ENCODE measurements at regions of chr12 and their contacts with region 1.

Region 1: GRCh38 chr12:116599285-116600136 is 40.3 kb downstream of the MAP1LC3B2 start:
- DNase-seq: peak; percentile 72
- ATAC-seq: peak; percentile 77
- H3K4me3 ChIP-seq: peak overlapping the region in 1 of 5 experiments; percentile 23
- H3K4me3 Mint-ChIP-seq: peak overlapping the region; percentile 64
- H3K27ac ChIP-seq: no peak overlapping the region
- H3K27ac Mint-ChIP-seq: peak overlapping the region; percentile 74
- H3K4me1 ChIP-seq: peaks cover 22 to 29% of the 10 kb centered on the region in 2 donors
- H3K4me1 Mint-ChIP-seq: peaks cover 33% of the 10 kb centered on the region
- H3K27me3 ChIP-seq: peaks cover 0 to 9% (median under 1%) of the 10 kb centered on the region in 4 experiments
- H3K27me3 Mint-ChIP-seq: no peaks in the 10 kb centered on the region
- CTCF ChIP-seq: peak; percentile 57

Region 2: GRCh38 chr12:115998119-115998633 is 601.3 kb before region 1 on chr12:
- CTCF ChIA-PET with region 1: interaction called, 37 read pairs
- POLR2A ChIA-PET with region 1: no interaction called
- intact Hi-C with region 1: loop called (anchors 2 kb)
- DNase-seq: peak; percentile 72
- ATAC-seq: peak; percentile 85
- H3K4me3 ChIP-seq: no peak overlapping the region
- H3K4me3 Mint-ChIP-seq: no peak overlapping the region
- H3K27ac ChIP-seq: peak overlapping the region in 1 of 2 donors; percentile 58
- H3K27ac Mint-ChIP-seq: peak overlapping the region; percentile 1
- H3K4me1 ChIP-seq: peaks cover 6 to 7% of the 10 kb centered on the region in 2 donors
- H3K4me1 Mint-ChIP-seq: peaks cover 6% of the 10 kb centered on the region
- H3K27me3 ChIP-seq: no peaks in the 10 kb centered on the region
- H3K27me3 Mint-ChIP-seq: no peaks in the 10 kb centered on the region
- CTCF ChIP-seq: peak; percentile 97

Region 3: DNA sequence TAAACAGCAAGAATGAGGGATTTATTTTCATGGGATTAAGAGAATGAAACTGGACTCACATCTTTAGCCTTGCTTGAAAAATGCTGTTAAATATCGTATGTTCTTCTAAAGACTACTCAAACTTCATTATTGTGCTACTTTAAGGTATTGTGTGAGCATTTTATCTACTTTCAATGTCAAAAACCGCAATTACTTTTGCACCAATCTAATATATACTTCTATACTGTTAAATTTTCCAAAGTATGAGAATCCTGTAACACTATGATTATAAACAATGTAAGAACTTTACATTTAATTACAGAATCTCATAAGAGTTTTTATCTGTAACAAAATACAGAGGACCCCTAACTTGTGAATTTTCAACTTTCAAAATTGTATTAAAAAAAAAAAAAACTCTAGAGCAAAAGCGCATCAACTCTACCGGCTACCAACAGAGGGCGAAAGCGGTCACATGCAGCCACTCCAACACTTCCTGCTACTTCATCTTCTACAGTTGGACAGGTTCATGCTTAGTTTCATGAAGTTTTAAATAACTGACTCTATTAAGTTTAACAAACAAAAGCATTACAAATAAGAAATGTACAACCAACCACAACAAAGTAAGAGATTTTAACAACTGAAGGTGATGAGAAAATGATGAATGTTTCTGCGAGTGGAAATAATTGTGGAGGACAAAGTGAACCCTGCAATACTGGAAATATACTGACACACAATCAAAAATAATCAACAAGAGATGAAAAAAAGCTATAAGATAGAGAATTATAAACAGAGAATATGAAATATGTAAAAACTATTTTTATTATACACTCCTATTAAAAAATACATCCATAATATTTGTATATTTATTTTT is 532.9 kb before region 1 on chr12:
- CTCF ChIA-PET with region 1: interaction called, 5 read pairs
- POLR2A ChIA-PET with region 1: no interaction called
- intact Hi-C with region 1: loop called (anchors 2 kb)
- DNase-seq: peak; percentile 73
- ATAC-seq: peak; percentile 74
- H3K4me3 ChIP-seq: no peak overlapping the region
- H3K4me3 Mint-ChIP-seq: no peak overlapping the region
- H3K27ac ChIP-seq: no peak overlapping the region
- H3K27ac Mint-ChIP-seq: peak overlapping the region; percentile 21
- H3K4me1 ChIP-seq: peaks cover 8% of the 10 kb centered on the region in 2 donors
- H3K4me1 Mint-ChIP-seq: peaks cover 42% of the 10 kb centered on the region
- H3K27me3 ChIP-seq: no peaks in the 10 kb centered on the region
- H3K27me3 Mint-ChIP-seq: no peaks in the 10 kb centered on the region
- CTCF ChIP-seq: peak; percentile 97

Region 4: DNA sequence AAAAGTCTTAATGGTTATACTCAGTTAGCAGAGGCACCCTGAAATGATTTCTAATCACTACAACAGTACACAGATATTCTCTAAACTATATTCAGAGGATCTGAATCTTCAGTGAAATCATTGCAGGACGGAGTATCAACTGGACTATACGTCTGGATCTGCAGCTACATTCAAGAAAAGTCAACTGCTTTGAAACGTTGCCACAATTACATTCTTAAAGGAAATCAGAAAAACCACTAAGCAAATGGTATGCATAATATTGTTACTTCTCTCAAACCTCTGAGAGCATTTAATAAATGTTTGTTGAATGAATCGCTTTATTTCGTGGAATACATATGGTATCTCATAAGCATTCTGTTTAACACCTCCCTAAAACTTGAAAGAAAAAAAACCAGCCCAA is 389.4 kb before region 1 on chr12:
- CTCF ChIA-PET with region 1: no interaction called
- POLR2A ChIA-PET with region 1: no interaction called
- intact Hi-C with region 1: no loop called
- DNase-seq: no peak
- ATAC-seq: no peak
- H3K4me3 ChIP-seq: no peak overlapping the region
- H3K4me3 Mint-ChIP-seq: no peak overlapping the region
- H3K27ac ChIP-seq: no peak overlapping the region
- H3K27ac Mint-ChIP-seq: no peak overlapping the region
- H3K4me1 ChIP-seq: peaks cover 8 to 21% of the 10 kb centered on the region in 2 donors
- H3K4me1 Mint-ChIP-seq: peaks cover 65% of the 10 kb centered on the region
- H3K27me3 ChIP-seq: no peaks in the 10 kb centered on the region
- H3K27me3 Mint-ChIP-seq: no peaks in the 10 kb centered on the region
- CTCF ChIP-seq: no peak

Region 5: GRCh38 chr12:116236148-116236731 is 363.3 kb before region 1 on chr12:
- CTCF ChIA-PET with region 1: interaction called, 11 read pairs
- POLR2A ChIA-PET with region 1: no interaction called
- intact Hi-C with region 1: no loop called
- DNase-seq: peak; percentile 72
- ATAC-seq: peak; percentile 66
- H3K4me3 ChIP-seq: no peak overlapping the region
- H3K4me3 Mint-ChIP-seq: no peak overlapping the region
- H3K27ac ChIP-seq: peak overlapping the region in 1 of 2 donors; percentile 60
- H3K27ac Mint-ChIP-seq: peak overlapping the region; percentile 43
- H3K4me1 ChIP-seq: peaks cover 4 to 12% of the 10 kb centered on the region in 2 donors
- H3K4me1 Mint-ChIP-seq: peaks cover 38% of the 10 kb centered on the region
- H3K27me3 ChIP-seq: no peaks in the 10 kb centered on the region
- H3K27me3 Mint-ChIP-seq: no peaks in the 10 kb centered on the region
- CTCF ChIP-seq: peak; percentile 77

Region 6: GRCh38 chr12:116533343-116534251 is 65.9 kb before region 1 on chr12:
- CTCF ChIA-PET with region 1: interaction called, 4 read pairs
- POLR2A ChIA-PET with region 1: no interaction called
- intact Hi-C with region 1: loop called (anchors 10 kb)
- DNase-seq: peak; percentile 85
- ATAC-seq: peak; percentile 93
- H3K4me3 ChIP-seq: peak overlapping the region; percentile 53 to 96 (median 67)
- H3K4me3 Mint-ChIP-seq: peak overlapping the region; percentile 85
- H3K27ac ChIP-seq: no peak overlapping the region
- H3K27ac Mint-ChIP-seq: peak overlapping the region; percentile 90
- H3K4me1 ChIP-seq: peaks cover 37 to 43% of the 10 kb centered on the region in 2 donors
- H3K4me1 Mint-ChIP-seq: peaks cover 52% of the 10 kb centered on the region
- H3K27me3 ChIP-seq: no peaks in the 10 kb centered on the region
- H3K27me3 Mint-ChIP-seq: no peaks in the 10 kb centered on the region
- CTCF ChIP-seq: no peak

Region 7: GRCh38 chr12:116609319-116610114 is 10.0 kb after region 1 on chr12:
- CTCF ChIA-PET with region 1: interaction called, 16 read pairs
- POLR2A ChIA-PET with region 1: no interaction called
- intact Hi-C with region 1: no loop called
- DNase-seq: peak; percentile 57
- ATAC-seq: no peak
- H3K4me3 ChIP-seq: no peak overlapping the region
- H3K4me3 Mint-ChIP-seq: no peak overlapping the region
- H3K27ac ChIP-seq: no peak overlapping the region
- H3K27ac Mint-ChIP-seq: no peak overlapping the region
- H3K4me1 ChIP-seq: peaks cover 8 to 11% of the 10 kb centered on the region in 2 donors
- H3K4me1 Mint-ChIP-seq: peaks cover 14% of the 10 kb centered on the region
- H3K27me3 ChIP-seq: peaks cover 0 to 5% (median 0%) of the 10 kb centered on the region in 4 experiments
- H3K27me3 Mint-ChIP-seq: peaks cover 7% of the 10 kb centered on the region
- CTCF ChIP-seq: peak; percentile 50

Measured in B cell (primary cell).